CD8-positive, alpha-beta T cell (primary cell): ENCODE measurements at regions of chr12 and their contacts with region 1.

Region 1: DNA sequence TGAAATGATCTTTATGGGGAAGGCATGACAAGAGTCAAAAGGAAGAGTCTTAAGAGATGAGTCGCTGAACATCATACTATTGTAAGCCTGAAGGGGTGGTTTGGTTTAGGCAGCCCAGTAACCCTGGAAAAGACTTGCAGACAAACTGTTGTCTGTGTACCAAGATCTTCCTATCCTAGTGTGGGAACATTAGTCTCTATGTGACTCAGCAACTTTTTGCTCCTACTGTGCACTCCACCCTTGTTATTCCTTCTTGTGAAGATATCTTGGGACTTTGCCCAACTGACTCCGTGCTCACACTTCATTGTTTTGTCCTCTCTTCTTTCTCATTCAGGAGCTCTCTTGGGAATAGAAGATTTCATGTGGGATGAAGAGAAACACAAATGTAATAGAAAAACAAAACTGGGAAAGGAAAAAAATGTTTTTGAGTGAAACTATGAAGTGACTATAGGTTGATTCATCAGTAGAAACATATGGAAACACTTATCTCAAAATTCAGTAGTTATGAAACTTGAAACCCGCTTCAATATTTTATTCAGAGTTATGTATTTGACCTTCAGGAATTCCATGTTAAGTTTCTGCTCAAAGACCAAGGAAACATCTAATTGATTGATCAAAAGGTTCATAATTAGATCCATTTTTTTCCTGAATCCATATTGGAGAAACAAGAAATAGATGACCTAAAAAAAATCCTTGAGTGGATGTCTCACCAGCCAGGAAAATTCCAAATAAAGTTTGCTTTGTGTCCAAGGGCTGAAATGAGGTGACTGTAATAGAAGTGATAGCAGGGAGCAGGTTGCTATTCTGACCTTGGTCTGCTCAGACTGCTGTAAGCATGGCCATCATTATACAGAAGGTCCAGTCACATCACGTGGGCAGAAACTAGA is 67.2 kb downstream of the BTG1 start:
- DNase-seq: no peak
- ATAC-seq: no peak
- H3K4me3 ChIP-seq: no peak overlapping the region
- H3K4me3 Mint-ChIP-seq: no peak overlapping the region
- H3K27ac ChIP-seq: no peak overlapping the region
- H3K27ac Mint-ChIP-seq: peak overlapping the region; percentile 84
- H3K4me1 ChIP-seq: peaks cover 48% of the 10 kb centered on the region
- H3K4me1 Mint-ChIP-seq: peaks cover 68% of the 10 kb centered on the region
- H3K27me3 ChIP-seq: no peaks in the 10 kb centered on the region
- H3K27me3 Mint-ChIP-seq: no peaks in the 10 kb centered on the region
- CTCF ChIP-seq: no peak

Region 2: DNA sequence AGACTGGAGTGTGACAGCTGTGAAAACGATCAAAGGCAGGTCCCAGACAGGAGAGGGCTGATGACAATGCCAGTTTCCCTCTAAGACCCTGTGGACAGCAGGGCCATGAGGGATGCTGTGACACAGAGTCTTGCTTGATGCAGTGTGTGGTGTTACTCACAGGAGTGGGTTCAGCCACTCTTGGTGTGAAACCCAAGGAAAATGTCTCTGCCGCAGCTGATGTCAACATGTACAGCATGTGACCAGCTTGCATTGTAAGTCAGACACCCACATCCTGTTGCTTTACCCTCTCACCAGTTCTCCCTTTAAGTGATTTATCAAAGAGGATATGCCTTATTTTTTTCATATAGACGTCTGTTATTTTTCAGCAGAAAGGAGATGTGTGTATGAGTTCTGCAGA is 201.4 kb before region 1 on chr12:
- CTCF ChIA-PET with region 1: no interaction called
- POLR2A ChIA-PET with region 1: no interaction called
- intact Hi-C with region 1: no loop called
- DNase-seq: peak; percentile 75 to 99 (median 86)
- ATAC-seq: peak; percentile 89
- H3K4me3 ChIP-seq: peak overlapping the region; percentile 16 to 29
- H3K4me3 Mint-ChIP-seq: peak overlapping the region; percentile 72
- H3K27ac ChIP-seq: peak overlapping the region; percentile 80 to 96
- H3K27ac Mint-ChIP-seq: peak overlapping the region; percentile 97
- H3K4me1 ChIP-seq: peaks cover 75% of the 10 kb centered on the region
- H3K4me1 Mint-ChIP-seq: peaks cover 74% of the 10 kb centered on the region
- H3K27me3 ChIP-seq: no peaks in the 10 kb centered on the region
- H3K27me3 Mint-ChIP-seq: no peaks in the 10 kb centered on the region
- CTCF ChIP-seq: no peak

Region 3: DNA sequence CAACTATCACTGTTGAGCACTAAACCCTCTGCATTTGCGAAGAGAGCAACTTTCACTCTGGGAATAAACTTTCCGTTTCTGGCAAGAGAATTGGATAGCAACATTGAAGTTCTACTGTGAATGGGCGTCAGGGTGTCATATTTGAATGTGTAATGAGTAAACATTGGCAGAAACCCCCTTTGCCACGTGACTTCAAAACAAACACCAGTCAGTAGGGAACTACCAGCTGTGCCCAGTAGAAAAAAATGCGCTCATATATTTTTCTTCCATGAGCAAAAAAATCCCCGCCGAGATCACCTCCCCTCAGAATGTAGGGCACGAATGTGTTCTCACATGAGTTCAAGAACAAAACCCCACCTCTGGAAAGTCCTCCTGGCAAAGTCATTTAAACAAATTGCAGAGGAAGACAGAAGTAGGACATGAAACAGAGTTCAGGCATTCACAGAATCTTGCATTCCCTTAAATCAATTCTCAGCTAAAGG is 13.4 kb before region 1 on chr12:
- CTCF ChIA-PET with region 1: no interaction called
- POLR2A ChIA-PET with region 1: interaction called, 3 read pairs
- intact Hi-C with region 1: loop called in 1 of 2 experiments (anchors 1 kb)
- DNase-seq: peak in 4 of 9 experiments; percentile 22 to 85 (median 66)
- ATAC-seq: peak; percentile 71
- H3K4me3 ChIP-seq: no peak overlapping the region
- H3K4me3 Mint-ChIP-seq: peak overlapping the region; percentile 40
- H3K27ac ChIP-seq: no peak overlapping the region
- H3K27ac Mint-ChIP-seq: peak overlapping the region; percentile 41
- H3K4me1 ChIP-seq: peaks cover 19% of the 10 kb centered on the region
- H3K4me1 Mint-ChIP-seq: peaks cover 54% of the 10 kb centered on the region
- H3K27me3 ChIP-seq: no peaks in the 10 kb centered on the region
- H3K27me3 Mint-ChIP-seq: no peaks in the 10 kb centered on the region
- CTCF ChIP-seq: no peak

Region 4: GRCh38 chr12:92094751-92095161 is 16.3 kb after region 1 on chr12:
- CTCF ChIA-PET with region 1: no interaction called
- POLR2A ChIA-PET with region 1: interaction called, 4 read pairs
- intact Hi-C with region 1: loop called in 1 of 2 experiments (anchors 2 kb)
- DNase-seq: no peak
- ATAC-seq: no peak
- H3K4me3 ChIP-seq: no peak overlapping the region
- H3K4me3 Mint-ChIP-seq: peak overlapping the region; percentile 13
- H3K27ac ChIP-seq: no peak overlapping the region
- H3K27ac Mint-ChIP-seq: no peak overlapping the region
- H3K4me1 ChIP-seq: peaks cover 33% of the 10 kb centered on the region
- H3K4me1 Mint-ChIP-seq: peaks cover 60% of the 10 kb centered on the region
- H3K27me3 ChIP-seq: no peaks in the 10 kb centered on the region
- H3K27me3 Mint-ChIP-seq: no peaks in the 10 kb centered on the region
- CTCF ChIP-seq: no peak